ENCODE measurements at regions of chr17 and their contacts with region 1.

Region 1: DNA sequence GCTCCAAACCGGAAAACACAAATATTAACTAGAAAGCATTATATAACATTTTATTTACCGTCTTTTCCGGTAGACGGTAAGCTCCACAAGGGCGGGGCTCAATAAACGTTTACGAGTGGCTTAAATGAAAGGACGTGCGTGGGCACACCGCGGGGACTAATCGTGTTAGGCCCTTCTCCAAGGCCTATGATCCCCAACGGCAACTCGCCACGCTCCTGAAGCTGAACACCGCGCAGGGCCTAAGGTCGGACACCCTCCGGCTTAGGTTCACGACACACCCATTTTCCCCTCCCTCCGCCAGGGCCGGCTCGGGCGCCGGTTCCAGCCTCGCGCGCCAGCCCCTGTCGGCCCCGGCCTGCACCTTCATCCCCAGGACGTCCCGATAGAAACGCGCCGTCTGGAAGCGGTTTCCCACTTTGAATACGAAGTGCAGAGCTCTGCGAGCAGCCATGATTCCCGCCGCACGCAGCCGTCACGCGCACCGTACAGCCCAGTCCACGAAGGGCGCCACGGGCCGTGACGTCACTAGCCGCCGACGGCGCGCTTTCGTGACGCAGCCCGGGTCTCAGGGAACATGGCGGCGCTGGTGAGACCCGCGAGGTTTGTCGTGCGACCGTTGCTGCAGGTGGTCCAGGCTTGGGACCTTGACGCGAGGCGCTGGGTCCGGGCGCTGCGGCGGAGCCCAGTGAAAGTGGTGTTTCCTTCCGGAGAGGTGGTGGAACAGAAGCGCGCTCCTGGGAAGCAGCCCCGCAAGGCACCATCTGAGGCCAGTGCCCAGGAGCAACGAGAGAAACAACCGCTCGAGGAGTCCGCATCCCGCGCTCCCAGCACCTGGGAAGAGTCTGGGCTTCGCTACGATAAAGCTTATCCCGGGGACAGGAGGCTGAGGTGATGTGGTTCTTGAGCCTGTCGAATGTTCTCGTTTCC is at the starts of genes GLOD4 and MRM3:
- DNase-seq: peak; percentile 91 to 95
- ATAC-seq: peak; percentile 95 to 96
- H3K4me3 ChIP-seq: peak within 1 kb of the TSS; percentile 96
- H3K27ac ChIP-seq: peak within 1 kb of the TSS; percentile 89 to 91
- H3K4me1 ChIP-seq: peaks cover 22% of the 10 kb centered on the region
- CTCF ChIP-seq: no peak
- EP300 ChIP-seq: no peak
- POLR2A ChIP-seq: peak; percentile 96
- RAD21 ChIP-seq: no peak
- polyA plus RNA-seq, gene GLOD4: 98.3 and 133 TPM in 2 replicates
- polyA plus RNA-seq, gene MRM3: 27.1 and 38.8 TPM in 2 replicates

Region 2: DNA sequence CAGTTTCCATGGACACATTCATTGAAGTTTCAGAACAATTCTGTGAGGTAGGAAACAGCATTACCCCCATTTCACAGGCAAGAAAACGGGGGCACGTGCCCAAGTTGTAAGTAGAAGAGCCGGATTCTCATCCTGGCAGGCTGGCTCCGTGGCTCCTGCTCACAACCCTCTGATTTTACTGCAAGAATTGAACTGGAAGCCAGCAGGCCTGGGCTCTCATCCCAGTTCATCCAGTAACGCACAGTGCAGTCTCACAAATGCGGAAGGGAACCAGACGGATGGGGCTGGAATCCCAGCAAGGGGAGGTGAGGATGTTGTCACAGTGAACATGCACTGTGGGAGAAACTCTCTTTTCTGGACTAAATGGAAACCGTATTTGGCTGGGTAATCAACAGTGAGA is 559.9 kb before region 1 on chr17:
- CTCF ChIA-PET with region 1: no interaction called
- POLR2A ChIA-PET with region 1: interaction called, 12 read pairs
- DNase-seq: no peak
- ATAC-seq: no peak
- H3K4me3 ChIP-seq: no peak overlapping the region
- H3K27ac ChIP-seq: no peak overlapping the region
- H3K4me1 ChIP-seq: no peaks in the 10 kb centered on the region
- CTCF ChIP-seq: no peak
- EP300 ChIP-seq: no peak
- POLR2A ChIP-seq: no peak
- RAD21 ChIP-seq: no peak

Region 3: GRCh38 chr17:716238-716637 is 65.8 kb before region 1 on chr17:
- CTCF ChIA-PET with region 1: interaction called, 3 read pairs
- POLR2A ChIA-PET with region 1: interaction called, 12 read pairs
- DNase-seq: no peak
- ATAC-seq: no peak
- H3K4me3 ChIP-seq: peak overlapping the region; percentile 70
- H3K27ac ChIP-seq: peak overlapping the region; percentile 79 to 91
- H3K4me1 ChIP-seq: peaks cover 25% of the 10 kb centered on the region
- CTCF ChIP-seq: no peak
- EP300 ChIP-seq: no peak
- POLR2A ChIP-seq: no peak
- RAD21 ChIP-seq: no peak

Region 4: GRCh38 chr17:794876-795275 is 12.8 kb after region 1 on chr17:
- CTCF ChIA-PET with region 1: interaction called, 20 read pairs
- POLR2A ChIA-PET with region 1: interaction called, 6 read pairs
- DNase-seq: peak; percentile 79 to 87
- ATAC-seq: peak; percentile 65 to 80
- H3K4me3 ChIP-seq: no peak overlapping the region
- H3K27ac ChIP-seq: peak overlapping the region in 1 of 2 experiments; percentile 17; a peak in 2 of 6 replicates
- H3K4me1 ChIP-seq: peaks cover 7% of the 10 kb centered on the region
- CTCF ChIP-seq: peak; percentile 92
- EP300 ChIP-seq: no peak
- POLR2A ChIP-seq: no peak
- RAD21 ChIP-seq: peak; percentile 97 to 98

Region 5: GRCh38 chr17:835263-835662 is 53.2 kb after region 1 on chr17:
- CTCF ChIA-PET with region 1: no interaction called
- POLR2A ChIA-PET with region 1: no interaction called
- DNase-seq: no peak
- ATAC-seq: no peak
- H3K4me3 ChIP-seq: no peak overlapping the region
- H3K27ac ChIP-seq: no peak overlapping the region
- H3K4me1 ChIP-seq: no peaks in the 10 kb centered on the region
- CTCF ChIP-seq: no peak
- EP300 ChIP-seq: no peak
- POLR2A ChIP-seq: no peak
- RAD21 ChIP-seq: no peak

Region 6: DNA sequence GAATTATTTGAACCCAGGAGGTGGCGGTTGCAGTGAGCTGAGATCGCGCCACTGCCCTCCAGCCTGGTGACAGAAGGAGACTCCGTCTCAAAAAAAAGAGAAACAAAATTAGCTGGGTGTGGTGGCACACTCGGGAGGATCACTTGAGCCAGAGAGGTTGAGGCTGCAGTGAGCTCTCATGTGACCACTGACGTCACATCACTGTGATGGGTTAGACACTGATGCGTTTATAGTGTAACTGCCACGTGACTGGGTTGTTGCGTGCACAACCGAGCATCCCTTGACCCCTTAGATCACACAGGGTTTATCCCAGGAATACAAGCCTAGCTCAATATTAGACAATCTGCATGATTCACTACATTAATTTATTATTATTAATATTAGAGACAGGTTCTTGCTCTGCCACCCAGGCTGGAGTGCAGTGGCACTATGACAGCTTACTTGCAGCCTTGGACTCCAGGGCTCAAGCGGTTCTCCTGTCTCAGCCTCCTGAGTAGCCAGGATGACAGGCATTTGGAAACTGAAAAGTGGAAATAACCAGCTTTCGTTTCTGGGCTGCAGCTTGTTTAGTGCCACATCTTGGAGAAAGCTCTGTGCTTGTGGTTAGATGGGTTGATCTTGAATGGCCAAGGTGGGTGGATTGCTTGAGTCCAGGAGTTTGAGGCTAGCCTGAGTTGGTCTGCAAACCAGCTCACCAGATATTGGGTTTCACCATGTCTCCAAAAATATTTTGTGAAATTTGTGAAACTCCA is 424.1 kb after region 1 on chr17:
- CTCF ChIA-PET with region 1: no interaction called
- POLR2A ChIA-PET with region 1: no interaction called
- DNase-seq: no peak
- ATAC-seq: no peak
- H3K4me3 ChIP-seq: no peak overlapping the region
- H3K27ac ChIP-seq: no peak overlapping the region
- H3K4me1 ChIP-seq: no peaks in the 10 kb centered on the region
- CTCF ChIP-seq: no peak
- EP300 ChIP-seq: no peak
- POLR2A ChIP-seq: no peak
- RAD21 ChIP-seq: no peak